Esophagus muscularis mucosa (tissue), 4 donors: ENCODE measurements at regions of chr7 and their contacts with region 1.

Region 1: GRCh38 chr7:65872776-65873581 is at the start of gene VKORC1L1:
- DNase-seq: peak; percentile 97
- H3K4me3 ChIP-seq: peak within 1 kb of the TSS; percentile 90 to 98 (median 92)
- H3K27ac ChIP-seq: peak within 1 kb of the TSS; percentile 80 to 89 (median 86)
- H3K4me1 ChIP-seq: peaks cover 11 to 22% (median 17%) of the 10 kb centered on the region in 4 donors
- H3K27me3 ChIP-seq: no peaks in the 10 kb centered on the region
- CTCF ChIP-seq: no peak
- EP300 ChIP-seq: no peak
- POLR2A ChIP-seq: no peak
- total RNA-seq, gene VKORC1L1: 23.7 to 30.1 (median 26.1) TPM

Region 2: GRCh38 chr7:65981965-65982792 is 109.2 kb after region 1 on chr7 and contains the start of gene GUSB:
- intact Hi-C with region 1: loop called (anchors 10 kb)
- DNase-seq: peak; percentile 96
- H3K4me3 ChIP-seq: peak within 1 kb of the TSS; percentile 70 to 83 (median 76)
- H3K27ac ChIP-seq: peak within 1 kb of the TSS; percentile 79 to 87 (median 80)
- H3K4me1 ChIP-seq: peaks cover 19 to 34% (median 27%) of the 10 kb centered on the region in 4 donors
- H3K27me3 ChIP-seq: no peaks in the 10 kb centered on the region
- CTCF ChIP-seq: peak in 1 of 3 experiments; percentile 13
- EP300 ChIP-seq: no peak
- POLR2A ChIP-seq: peak; percentile 39
- total RNA-seq, gene GUSB: 16.2 to 19.0 (median 17.3) TPM